B cell (primary cell): ENCODE measurements at regions of chr14 and their contacts with region 1.

Region 1: DNA sequence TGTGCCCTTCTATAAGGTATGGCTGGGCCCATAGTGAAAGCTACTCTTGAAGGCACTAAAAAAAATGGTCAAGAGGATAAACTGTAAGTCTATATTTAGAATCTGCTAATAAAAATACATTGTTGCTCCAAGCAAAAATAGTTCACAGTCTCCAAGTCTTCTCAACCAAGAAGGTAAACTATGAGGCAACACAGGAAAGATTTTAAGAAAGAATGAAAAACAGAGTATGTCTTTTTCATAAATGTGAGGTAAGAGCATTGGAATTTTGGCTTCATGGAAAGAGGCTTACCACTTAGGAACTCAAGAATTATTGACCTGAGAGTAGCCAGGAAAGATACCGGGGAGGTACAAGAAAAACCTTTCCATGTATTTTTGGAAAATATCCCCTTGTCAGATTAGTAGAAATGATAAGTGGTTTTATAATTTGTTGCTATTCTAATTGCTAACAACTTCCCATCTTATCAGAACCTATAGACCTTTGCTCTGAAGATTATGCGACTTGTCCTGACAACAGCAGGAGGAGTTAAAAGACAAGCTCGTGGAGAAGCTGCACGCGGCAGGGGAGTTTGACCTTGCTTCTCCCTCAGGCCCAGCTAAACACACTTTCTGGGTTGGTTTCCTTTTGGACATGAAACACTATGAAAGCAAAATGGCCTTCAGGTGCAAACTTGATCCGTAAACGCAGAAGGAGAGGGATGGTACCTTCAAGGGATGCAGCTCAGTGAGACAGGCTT is 238.1 kb downstream of the FOXN3 start:
- DNase-seq: no peak
- ATAC-seq: no peak
- H3K4me3 ChIP-seq: no peak overlapping the region
- H3K4me3 Mint-ChIP-seq: no peak overlapping the region
- H3K27ac ChIP-seq: peak overlapping the region in 1 of 2 donors; percentile 39
- H3K27ac Mint-ChIP-seq: peak overlapping the region; percentile 33
- H3K4me1 ChIP-seq: peaks cover 7 to 11% of the 10 kb centered on the region in 2 donors
- H3K4me1 Mint-ChIP-seq: peaks cover 19% of the 10 kb centered on the region
- H3K27me3 ChIP-seq: no peaks in the 10 kb centered on the region
- H3K27me3 Mint-ChIP-seq: no peaks in the 10 kb centered on the region
- CTCF ChIP-seq: no peak

Region 2: GRCh38 chr14:89165189-89166181 is 13.5 kb before region 1 on chr14:
- CTCF ChIA-PET with region 1: interaction called, 27 read pairs
- POLR2A ChIA-PET with region 1: no interaction called
- intact Hi-C with region 1: no loop called
- DNase-seq: peak; percentile 57
- ATAC-seq: peak; percentile 58
- H3K4me3 ChIP-seq: peak overlapping the region; percentile 25 to 65 (median 44)
- H3K4me3 Mint-ChIP-seq: peak overlapping the region; percentile 88
- H3K27ac ChIP-seq: peak overlapping the region; percentile 61 to 72
- H3K27ac Mint-ChIP-seq: peak overlapping the region; percentile 87
- H3K4me1 ChIP-seq: peaks cover 23 to 25% of the 10 kb centered on the region in 2 donors
- H3K4me1 Mint-ChIP-seq: peaks cover 36% of the 10 kb centered on the region
- H3K27me3 ChIP-seq: no peaks in the 10 kb centered on the region
- H3K27me3 Mint-ChIP-seq: no peaks in the 10 kb centered on the region
- CTCF ChIP-seq: no peak

Region 3: DNA sequence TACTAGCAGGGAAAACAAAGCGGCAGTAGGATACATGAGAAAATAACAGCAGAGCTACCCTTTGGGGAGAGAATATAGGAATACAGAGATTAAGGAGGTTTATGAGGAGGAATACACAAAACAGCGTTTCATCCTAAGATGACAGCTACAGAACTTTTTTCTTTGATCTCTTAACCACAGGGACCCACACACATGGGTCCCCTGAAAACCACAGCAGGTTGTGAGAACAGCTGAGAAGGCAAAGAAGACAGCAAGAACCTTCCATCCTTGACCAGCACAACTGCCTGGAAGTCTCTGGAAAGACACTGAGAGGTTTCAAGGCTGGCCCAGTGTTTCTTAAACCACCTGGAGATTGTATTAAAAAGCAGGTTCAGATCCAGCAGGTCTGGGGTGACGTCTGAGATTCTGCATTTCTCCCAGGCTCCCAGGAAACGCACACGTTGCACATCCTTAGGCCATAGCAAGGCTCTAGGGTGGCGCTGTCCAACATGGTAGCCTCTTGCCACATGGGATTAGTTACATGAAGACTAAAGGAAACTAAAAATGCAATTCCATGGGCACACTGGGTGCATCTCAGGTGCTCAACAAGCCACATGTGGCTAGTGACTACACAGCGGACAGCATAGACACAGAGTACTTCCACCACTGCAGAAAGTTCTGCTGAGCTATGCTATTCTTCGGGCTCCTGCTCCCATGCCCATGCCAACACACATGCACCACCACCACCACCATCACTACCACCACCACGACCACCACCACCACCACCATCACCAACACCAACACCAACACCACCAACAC is 145.7 kb after region 1 on chr14:
- CTCF ChIA-PET with region 1: no interaction called
- POLR2A ChIA-PET with region 1: no interaction called
- intact Hi-C with region 1: no loop called
- DNase-seq: no peak
- ATAC-seq: no peak
- H3K4me3 ChIP-seq: no peak overlapping the region
- H3K4me3 Mint-ChIP-seq: no peak overlapping the region
- H3K27ac ChIP-seq: no peak overlapping the region
- H3K27ac Mint-ChIP-seq: peak overlapping the region; percentile 74
- H3K4me1 ChIP-seq: peaks cover 13 to 21% of the 10 kb centered on the region in 2 donors
- H3K4me1 Mint-ChIP-seq: peaks cover 51% of the 10 kb centered on the region
- H3K27me3 ChIP-seq: no peaks in the 10 kb centered on the region
- H3K27me3 Mint-ChIP-seq: no peaks in the 10 kb centered on the region
- CTCF ChIP-seq: no peak

Region 4: DNA sequence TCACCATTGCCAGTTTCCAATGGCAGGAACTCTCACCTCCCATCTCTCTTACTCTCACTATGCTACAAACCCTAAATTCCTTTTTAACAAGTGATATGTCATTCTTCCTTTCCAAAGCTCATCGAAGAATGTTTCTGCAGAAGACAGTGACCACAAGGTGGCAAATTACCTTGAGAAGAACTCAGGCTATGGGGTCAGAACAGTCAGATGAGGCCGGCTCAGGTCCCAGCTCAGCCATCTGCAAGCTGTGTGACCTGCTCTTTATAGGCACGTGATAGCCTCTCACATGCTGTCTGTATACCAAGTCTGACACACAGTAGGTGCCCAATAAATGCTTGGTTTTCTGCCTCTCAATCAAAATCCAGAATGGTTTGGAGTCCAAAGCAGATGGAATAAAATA is 157.4 kb after region 1 on chr14:
- CTCF ChIA-PET with region 1: interaction called, 13 read pairs
- POLR2A ChIA-PET with region 1: no interaction called
- intact Hi-C with region 1: no loop called
- DNase-seq: peak; percentile 69
- ATAC-seq: peak; percentile 69
- H3K4me3 ChIP-seq: no peak overlapping the region
- H3K4me3 Mint-ChIP-seq: no peak overlapping the region
- H3K27ac ChIP-seq: peak overlapping the region in 1 of 2 donors; percentile 31
- H3K27ac Mint-ChIP-seq: peak overlapping the region; percentile 62
- H3K4me1 ChIP-seq: peaks cover 39 to 42% of the 10 kb centered on the region in 2 donors
- H3K4me1 Mint-ChIP-seq: peaks cover 67% of the 10 kb centered on the region
- H3K27me3 ChIP-seq: no peaks in the 10 kb centered on the region
- H3K27me3 Mint-ChIP-seq: no peaks in the 10 kb centered on the region
- CTCF ChIP-seq: peak; percentile 52

Region 5: DNA sequence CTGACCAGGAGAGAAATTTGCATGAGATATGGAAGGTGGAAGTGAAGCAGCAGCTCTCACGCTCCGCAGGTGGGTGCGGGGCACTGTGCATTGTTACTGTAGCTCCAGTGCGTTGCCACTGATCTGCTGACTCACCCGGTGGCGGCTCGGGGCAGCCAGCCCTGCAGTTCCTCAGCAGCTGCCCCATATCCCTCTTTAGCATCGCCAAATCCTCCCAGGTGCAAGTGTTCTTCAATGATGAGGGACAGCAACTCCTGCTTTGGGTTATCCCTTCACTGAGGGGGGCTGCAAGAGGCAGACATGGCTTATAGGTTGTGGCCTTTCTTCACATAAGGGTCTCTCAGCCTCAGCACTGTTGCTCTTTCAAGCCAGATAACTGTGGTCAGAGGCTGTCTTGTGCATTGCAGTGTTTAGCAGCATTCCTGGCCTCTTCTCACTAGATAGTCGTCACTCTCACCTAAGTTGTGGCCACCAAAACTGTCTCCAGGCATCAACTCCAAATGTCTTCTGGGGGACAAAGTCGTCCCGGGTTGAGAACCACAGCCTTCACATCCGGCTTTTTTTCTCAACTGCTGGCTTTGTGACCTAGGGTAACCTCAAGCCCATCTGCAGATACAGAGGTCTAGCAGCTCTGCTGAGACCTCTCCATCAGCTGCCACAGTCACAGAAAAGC is 594.8 kb after region 1 on chr14:
- CTCF ChIA-PET with region 1: interaction called, 15 read pairs
- POLR2A ChIA-PET with region 1: no interaction called
- intact Hi-C with region 1: no loop called
- DNase-seq: peak; percentile 53
- ATAC-seq: peak; percentile 87
- H3K4me3 ChIP-seq: peak overlapping the region in 1 of 5 experiments; percentile 22
- H3K4me3 Mint-ChIP-seq: peak overlapping the region; percentile 32
- H3K27ac ChIP-seq: no peak overlapping the region
- H3K27ac Mint-ChIP-seq: peak overlapping the region; percentile 51
- H3K4me1 ChIP-seq: peaks cover 18 to 22% of the 10 kb centered on the region in 2 donors
- H3K4me1 Mint-ChIP-seq: peaks cover 22% of the 10 kb centered on the region
- H3K27me3 ChIP-seq: no peaks in the 10 kb centered on the region
- H3K27me3 Mint-ChIP-seq: no peaks in the 10 kb centered on the region
- CTCF ChIP-seq: no peak

Region 6: DNA sequence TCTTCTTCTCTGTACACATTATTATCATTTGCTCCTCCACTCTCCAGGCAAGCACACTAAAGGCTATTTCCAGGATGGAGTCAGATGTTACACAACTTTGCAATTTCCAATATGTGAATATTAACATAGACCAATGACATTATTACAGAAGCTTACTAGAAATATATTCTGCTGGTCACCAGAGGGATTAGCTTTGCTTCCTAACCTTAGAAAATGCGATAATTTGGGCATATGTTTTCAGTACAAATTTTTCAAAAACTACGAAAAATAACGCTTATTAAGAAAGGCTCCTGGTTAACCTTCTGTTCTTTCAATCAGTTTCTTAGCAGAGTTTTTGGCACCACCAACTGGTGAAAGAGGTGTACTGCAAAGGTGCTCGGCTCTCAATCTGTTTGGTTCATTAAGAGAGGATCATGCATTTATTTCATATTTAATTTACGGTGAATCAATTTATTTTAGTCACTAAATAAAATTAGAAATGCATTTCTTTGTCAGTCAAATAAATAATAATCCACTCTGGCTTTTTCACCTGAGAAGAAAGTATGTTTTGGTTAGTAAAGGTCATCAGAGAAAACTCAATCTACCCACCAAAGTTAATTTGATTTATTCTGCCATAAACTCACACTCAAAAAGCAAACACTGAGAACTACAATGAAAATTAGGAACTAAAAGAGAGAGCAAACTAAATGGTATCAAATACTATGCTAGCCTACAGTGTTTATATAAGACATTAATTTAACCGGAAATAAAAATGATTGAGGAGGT is 736.3 kb after region 1 on chr14:
- CTCF ChIA-PET with region 1: interaction called, 6 read pairs
- POLR2A ChIA-PET with region 1: no interaction called
- intact Hi-C with region 1: loop called (anchors 1 kb)
- DNase-seq: peak; percentile 72
- ATAC-seq: peak; percentile 54
- H3K4me3 ChIP-seq: no peak overlapping the region
- H3K4me3 Mint-ChIP-seq: no peak overlapping the region
- H3K27ac ChIP-seq: no peak overlapping the region
- H3K27ac Mint-ChIP-seq: no peak overlapping the region
- H3K4me1 ChIP-seq: no peaks in the 10 kb centered on the region
- H3K4me1 Mint-ChIP-seq: peaks cover 3% of the 10 kb centered on the region
- H3K27me3 ChIP-seq: no peaks in the 10 kb centered on the region
- H3K27me3 Mint-ChIP-seq: peaks cover 3% of the 10 kb centered on the region
- CTCF ChIP-seq: peak; percentile 98